Right ventricle myocardium inferior (tissue), 1 donor: ENCODE measurements at regions of chr7 and their contacts with region 1.

Region 1: DNA sequence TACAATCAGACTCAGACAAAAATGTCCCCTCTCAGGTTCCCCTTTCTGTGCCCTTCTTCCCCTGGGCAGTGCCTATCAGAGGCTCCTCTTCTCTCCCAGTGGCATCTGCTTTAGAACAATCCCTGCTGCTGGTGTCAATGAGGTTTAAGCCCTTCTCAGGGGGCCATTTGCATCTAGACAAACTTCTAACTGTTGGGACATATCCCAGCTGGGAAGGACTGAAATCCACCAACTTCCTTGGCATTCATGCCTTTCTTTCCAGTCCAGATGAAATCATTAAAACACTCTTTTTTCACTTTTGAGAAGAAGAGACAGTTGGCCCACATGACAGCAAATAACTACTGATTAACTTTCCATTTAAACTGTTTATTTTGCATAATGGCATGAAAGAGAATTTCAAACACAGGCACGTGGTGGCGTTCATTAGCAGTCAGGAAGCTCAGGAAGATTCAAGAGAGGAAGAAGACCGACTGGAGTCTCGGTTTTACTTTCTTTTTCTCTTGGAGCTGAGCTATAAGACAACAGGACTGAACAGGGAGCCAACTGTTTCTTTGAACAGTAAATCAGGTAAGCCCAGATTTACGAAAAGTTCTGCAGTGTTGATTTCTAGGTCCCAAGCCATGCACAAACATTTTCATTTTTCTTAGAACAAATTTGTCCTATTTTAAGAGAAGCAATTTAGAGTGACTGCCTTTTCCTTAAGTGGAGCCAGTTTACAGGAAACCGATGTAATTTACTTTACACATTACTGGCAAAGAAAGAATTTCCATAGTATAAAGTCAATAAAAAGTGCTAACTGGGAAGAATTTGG is at the start of gene GIMAP2:
- DNase-seq: no peak
- ATAC-seq: peak; percentile 42
- total RNA-seq, gene GIMAP2: 6.2 TPM

Region 2: DNA sequence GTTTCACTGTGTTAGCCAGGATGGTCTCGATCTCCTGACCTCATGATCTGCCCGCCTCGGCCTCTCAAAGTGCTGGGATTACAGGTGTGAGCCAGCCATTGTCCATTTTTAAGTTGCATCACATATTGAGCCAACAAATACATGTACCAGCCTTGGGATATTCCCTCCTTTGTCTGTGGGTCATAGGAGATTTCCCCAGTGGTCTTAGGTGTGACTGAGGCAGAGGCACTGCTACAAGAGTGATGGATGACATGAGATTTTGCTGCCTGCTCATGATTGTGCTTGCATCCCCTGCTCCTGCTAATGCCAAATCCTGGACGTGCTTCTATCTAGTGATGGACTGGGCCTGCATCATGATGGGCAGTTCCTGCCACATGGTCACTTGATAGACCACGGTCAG is 42.5 kb before region 1 on chr7:
- intact Hi-C with region 1: no loop called
- DNase-seq: no peak
- ATAC-seq: no peak

Region 3: DNA sequence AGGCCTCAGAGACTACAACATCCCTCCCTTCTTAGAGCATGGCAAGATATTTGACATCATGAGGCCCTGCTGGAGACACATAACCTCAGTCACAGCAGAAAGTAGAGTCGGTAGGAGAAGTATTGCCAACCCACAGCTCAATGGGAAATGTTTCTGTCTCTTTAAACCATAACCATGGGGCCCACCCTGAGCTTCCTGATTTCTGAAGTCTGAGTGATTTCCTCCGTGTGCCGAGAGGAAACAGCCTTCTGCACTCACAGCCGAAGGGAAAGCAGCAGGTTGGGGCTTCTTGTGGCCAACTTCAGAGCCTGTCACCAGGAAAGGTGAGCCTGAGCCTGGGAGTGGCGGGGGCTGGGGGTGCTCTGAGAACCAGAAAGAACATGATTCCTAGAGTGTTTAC is 30.9 kb after region 1 on chr7 and contains the start of gene GIMAP1:
- intact Hi-C with region 1: loop called (anchors 2 kb)
- DNase-seq: peak; percentile 70
- ATAC-seq: peak; percentile 82
- total RNA-seq, gene GIMAP1: 5.8 TPM

Region 4: DNA sequence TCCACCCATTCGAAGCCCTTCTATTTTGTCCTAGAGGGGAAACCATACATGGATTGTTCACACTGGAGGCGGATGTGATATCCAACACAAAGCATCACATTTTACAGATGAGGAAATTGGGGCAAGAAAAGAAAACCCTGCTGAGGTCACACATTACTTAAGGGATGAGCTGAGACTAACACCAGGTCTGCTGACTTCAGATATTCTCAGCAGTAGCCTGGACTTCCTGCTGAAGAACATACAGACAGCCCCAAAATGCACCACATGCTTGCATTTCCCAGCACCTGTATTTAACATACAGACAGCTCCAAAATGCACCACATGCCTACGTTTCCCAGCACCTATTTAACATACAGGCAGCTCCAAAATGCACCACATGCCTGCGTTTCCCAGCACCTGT is 63.0 kb after region 1 on chr7:
- intact Hi-C with region 1: no loop called
- DNase-seq: no peak
- ATAC-seq: no peak